SK-N-SH (cell line): ENCODE measurements at regions of chr16 and their contacts with region 1.

Region 1: GRCh38 chr16:57300387-57301125 is 16.1 kb upstream of the PLLP start:
- DNase-seq: peak; percentile 93
- H3K4me3 ChIP-seq: peak overlapping the region; percentile 56 to 62
- H3K27ac ChIP-seq: peak overlapping the region; percentile 76 to 87
- H3K4me1 ChIP-seq: peaks cover 0 to 7% of the 10 kb centered on the region in 2 experiments; a peak in 1 of 4 replicates
- H3K27me3 ChIP-seq: no peaks in the 10 kb centered on the region
- CTCF ChIP-seq: peak; percentile 97
- EP300 ChIP-seq: no peak; a peak in 1 of 4 replicates
- RAD21 ChIP-seq: peak; percentile 100

Region 2: DNA sequence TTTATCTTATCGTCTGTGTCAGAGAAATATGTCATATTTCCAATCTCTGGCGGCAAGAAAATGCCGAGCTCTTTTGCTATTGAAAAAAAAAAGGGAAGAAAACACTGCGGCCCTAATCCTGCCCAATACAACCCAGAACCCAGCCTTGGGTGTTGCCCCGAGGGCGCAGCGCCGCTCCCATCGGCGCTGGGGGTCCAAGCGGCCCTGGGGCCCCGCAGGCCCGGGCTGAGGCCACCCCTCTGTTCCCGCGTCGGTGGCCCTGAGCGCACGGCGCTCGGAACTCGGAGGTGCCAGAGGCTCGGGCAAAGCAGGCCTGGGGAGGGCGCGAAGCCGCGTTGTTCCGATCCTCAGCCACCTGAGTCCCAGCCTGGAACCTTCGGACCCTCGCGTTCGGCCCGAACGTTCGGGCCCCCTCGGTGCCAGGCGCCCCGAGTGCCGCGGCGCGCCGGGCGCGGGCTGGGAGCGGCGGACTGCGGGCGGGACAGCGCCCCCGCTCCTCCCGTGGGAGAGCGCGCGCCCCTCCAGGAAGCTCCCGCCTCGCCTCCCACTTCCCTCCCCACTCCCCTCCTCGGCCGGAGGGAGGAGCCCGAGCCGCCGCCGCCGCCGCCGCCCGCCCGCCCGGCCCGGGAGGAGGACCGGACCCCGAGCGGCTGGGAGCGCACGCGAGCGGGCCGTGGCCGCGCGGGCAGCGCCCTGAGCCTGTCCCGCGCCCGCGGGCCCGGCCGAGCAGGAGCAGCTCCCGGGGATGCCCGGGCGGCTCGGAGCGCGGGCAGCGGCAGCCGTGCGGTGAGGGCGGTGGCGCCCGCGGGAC is 208.4 kb before region 1 on chr16 and contains the start of gene CPNE2:
- CTCF ChIA-PET with region 1: interaction called, 14 read pairs
- POLR2A ChIA-PET with region 1: no interaction called
- DNase-seq: peak; percentile 95
- H3K4me3 ChIP-seq: peak within 1 kb of the TSS; percentile 75 to 81
- H3K27ac ChIP-seq: peak within 1 kb of the TSS; percentile 36 to 51; a peak in 2 of 4 replicates
- H3K4me1 ChIP-seq: peaks cover 12 to 25% of the 10 kb centered on the region in 2 experiments; a peak in 1 of 4 replicates
- H3K27me3 ChIP-seq: no peaks in the 10 kb centered on the region
- CTCF ChIP-seq: no peak; the same call in 1 of the 2 replicates
- EP300 ChIP-seq: no peak
- RAD21 ChIP-seq: no peak
- polyA plus RNA-seq, gene CPNE2: 63.8 and 73.0 TPM in 2 replicates

Region 3: DNA sequence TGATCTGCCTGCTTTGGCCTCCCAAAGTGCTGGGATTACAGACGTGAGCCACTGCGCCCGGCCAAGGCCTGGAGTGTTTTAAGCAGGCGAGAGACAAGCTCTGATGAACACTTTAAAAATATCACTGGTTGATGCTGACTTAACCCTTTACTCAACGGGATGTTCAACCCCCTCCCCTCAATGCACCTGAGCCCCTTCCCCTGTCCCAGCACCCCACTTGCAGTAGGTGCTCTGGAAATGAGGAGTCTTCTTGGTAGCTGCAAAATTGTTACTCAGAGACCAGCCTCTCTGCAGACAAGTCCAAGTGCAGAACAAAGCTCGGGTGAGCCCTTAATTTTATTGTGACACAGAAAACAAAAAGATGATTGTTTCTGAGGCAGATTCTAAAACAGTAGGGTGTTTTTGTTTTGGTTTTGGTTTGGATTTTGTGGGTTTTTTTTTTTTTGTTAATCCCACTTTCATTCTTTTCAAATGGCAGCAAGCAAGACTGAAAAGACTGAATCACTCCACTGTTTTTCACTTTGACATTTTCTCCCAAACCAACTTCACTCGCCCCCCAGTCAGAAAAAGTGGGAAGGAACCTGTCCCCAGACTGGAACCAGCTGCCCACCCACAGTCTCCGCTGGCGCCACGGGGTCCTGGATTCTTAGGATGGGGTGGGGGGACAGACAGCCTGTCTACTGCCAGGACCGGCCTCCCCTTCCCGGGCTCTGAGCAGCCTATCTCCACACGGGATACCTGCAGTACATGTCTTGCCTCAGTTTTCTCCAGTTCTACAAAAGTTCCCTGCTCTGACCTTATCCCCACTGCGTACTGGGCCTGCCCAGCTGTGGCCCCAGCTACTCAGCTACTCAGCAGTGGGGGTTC is 10.9 kb before region 1 on chr16:
- CTCF ChIA-PET with region 1: interaction called, 11 read pairs
- POLR2A ChIA-PET with region 1: no interaction called
- DNase-seq: no peak
- H3K4me3 ChIP-seq: no peak overlapping the region
- H3K27ac ChIP-seq: no peak overlapping the region
- H3K4me1 ChIP-seq: no peaks in the 10 kb centered on the region
- H3K27me3 ChIP-seq: no peaks in the 10 kb centered on the region
- CTCF ChIP-seq: no peak
- EP300 ChIP-seq: no peak
- RAD21 ChIP-seq: no peak

Region 4: GRCh38 chr16:57416122-57416509 is 115.6 kb after region 1 on chr16:
- CTCF ChIA-PET with region 1: interaction called, 544 read pairs
- POLR2A ChIA-PET with region 1: interaction called, 12 read pairs
- DNase-seq: no peak
- H3K4me3 ChIP-seq: no peak overlapping the region
- H3K27ac ChIP-seq: no peak overlapping the region
- H3K4me1 ChIP-seq: peaks cover 0 to 37% of the 10 kb centered on the region in 2 experiments; a peak in 2 of 4 replicates
- H3K27me3 ChIP-seq: no peaks in the 10 kb centered on the region
- CTCF ChIP-seq: no peak
- EP300 ChIP-seq: no peak
- RAD21 ChIP-seq: no peak

Region 5: GRCh38 chr16:57447186-57447962 is 146.8 kb after region 1 on chr16 and contains the starts of genes CIAPIN1 and COQ9:
- CTCF ChIA-PET with region 1: interaction called, 12 read pairs
- POLR2A ChIA-PET with region 1: no interaction called
- DNase-seq: peak; percentile 96
- H3K4me3 ChIP-seq: peak within 1 kb of the TSS; percentile 90 to 96
- H3K27ac ChIP-seq: peak within 1 kb of the TSS; percentile 65 to 84; a peak in 3 of 4 replicates
- H3K4me1 ChIP-seq: peaks cover 3 to 9% of the 10 kb centered on the region in 2 experiments; a peak in 2 of 4 replicates
- H3K27me3 ChIP-seq: no peaks in the 10 kb centered on the region
- CTCF ChIP-seq: no peak
- EP300 ChIP-seq: no peak
- RAD21 ChIP-seq: no peak
- polyA plus RNA-seq, gene CIAPIN1: 43.6 and 63.3 TPM in 2 replicates
- polyA plus RNA-seq, gene COQ9: 81.2 and 104 TPM in 2 replicates

Region 6: DNA sequence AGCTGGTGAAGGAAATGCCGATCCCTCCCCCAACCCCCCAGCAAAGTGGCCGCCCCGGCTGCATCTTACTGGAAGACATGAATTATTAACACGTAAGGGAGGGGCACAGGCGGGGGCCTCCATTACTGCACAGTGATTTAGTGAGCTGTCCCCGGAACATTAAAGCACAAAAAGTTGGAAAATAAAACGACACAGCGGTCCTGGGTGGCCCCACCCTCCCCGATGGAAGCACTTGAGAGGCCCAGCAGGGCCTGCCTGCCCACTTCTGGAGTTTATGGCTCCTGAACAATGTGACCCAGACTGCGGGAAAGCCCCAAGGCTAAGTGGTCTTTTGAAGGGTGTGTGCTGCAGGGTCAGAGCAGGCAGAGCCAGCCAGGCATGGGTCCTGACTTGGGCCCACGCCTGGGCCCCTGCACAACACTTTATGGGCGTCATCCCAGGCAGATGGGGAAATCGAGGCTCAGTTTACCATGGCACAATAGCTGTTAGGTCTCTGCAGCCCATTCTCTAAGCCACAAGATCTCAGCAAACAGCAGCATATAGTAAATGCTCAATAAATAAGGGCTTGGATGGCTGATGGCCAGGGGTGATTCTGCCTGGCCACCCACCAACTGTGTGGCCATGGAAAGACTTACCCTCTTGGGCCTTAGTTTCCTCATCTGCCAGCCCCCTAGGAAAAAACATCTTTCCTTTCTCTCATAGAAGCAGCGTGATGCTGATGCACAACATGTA is 213.0 kb after region 1 on chr16:
- CTCF ChIA-PET with region 1: interaction called, 10 read pairs
- POLR2A ChIA-PET with region 1: no interaction called
- DNase-seq: peak; percentile 19
- H3K4me3 ChIP-seq: no peak overlapping the region
- H3K27ac ChIP-seq: peak overlapping the region in 1 of 2 experiments; percentile 4; a peak in 1 of 4 replicates
- H3K4me1 ChIP-seq: peaks cover 0 to 47% of the 10 kb centered on the region in 2 experiments; a peak in 1 of 4 replicates
- H3K27me3 ChIP-seq: no peaks in the 10 kb centered on the region
- CTCF ChIP-seq: no peak
- EP300 ChIP-seq: no peak
- RAD21 ChIP-seq: no peak